ENCODE measurements at regions of chr1 and their contacts with region 1.

Region 1: GRCh38 chr1:235866913-235867845 is 473 bp upstream of the LYST start:
- DNase-seq: peak; percentile 100
- ATAC-seq: peak; percentile 67
- H3K4me3 Mint-ChIP-seq: peak overlapping the region; percentile 98
- H3K27ac Mint-ChIP-seq: peak overlapping the region; percentile 97
- H3K4me1 Mint-ChIP-seq: peaks cover 52% of the 10 kb centered on the region
- H3K27me3 Mint-ChIP-seq: no peaks in the 10 kb centered on the region

Region 2: GRCh38 chr1:235878082-235878811 is 11.1 kb after region 1 on chr1:
- POLR2A ChIA-PET with region 1: interaction called, 30 read pairs
- DNase-seq: no peak
- ATAC-seq: no peak
- H3K4me3 Mint-ChIP-seq: no peak overlapping the region
- H3K27ac Mint-ChIP-seq: no peak overlapping the region
- H3K4me1 Mint-ChIP-seq: peaks cover 51% of the 10 kb centered on the region
- H3K27me3 Mint-ChIP-seq: no peaks in the 10 kb centered on the region

Region 3: GRCh38 chr1:235888119-235888643 is 21.0 kb after region 1 on chr1:
- POLR2A ChIA-PET with region 1: interaction called, 57 read pairs
- DNase-seq: no peak
- ATAC-seq: peak; percentile 96
- H3K4me3 Mint-ChIP-seq: peak overlapping the region; percentile 77
- H3K27ac Mint-ChIP-seq: peak overlapping the region; percentile 95
- H3K4me1 Mint-ChIP-seq: peaks cover 42% of the 10 kb centered on the region
- H3K27me3 Mint-ChIP-seq: no peaks in the 10 kb centered on the region

Region 4: DNA sequence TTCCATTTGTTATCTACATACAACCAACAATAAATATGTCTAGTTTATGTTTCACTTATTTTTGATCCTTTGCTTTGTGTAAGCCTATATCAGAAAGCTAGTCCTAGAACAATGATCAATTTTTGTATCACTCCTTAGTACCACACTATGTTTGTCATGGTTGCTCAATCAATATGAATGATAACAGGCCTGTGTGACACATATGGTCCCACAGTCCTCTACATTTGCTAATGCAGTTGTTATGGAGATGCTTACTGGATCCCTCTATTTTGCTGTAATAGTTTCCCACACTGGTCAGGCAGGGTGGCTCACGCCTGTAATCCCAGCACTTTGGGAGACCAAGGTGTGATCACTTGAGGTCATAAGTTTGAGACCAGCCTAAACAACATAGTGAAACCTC is 355.5 kb after region 1 on chr1:
- POLR2A ChIA-PET with region 1: no interaction called
- DNase-seq: no peak
- ATAC-seq: no peak
- H3K4me3 Mint-ChIP-seq: no peak overlapping the region
- H3K27ac Mint-ChIP-seq: no peak overlapping the region
- H3K4me1 Mint-ChIP-seq: no peaks in the 10 kb centered on the region
- H3K27me3 Mint-ChIP-seq: no peaks in the 10 kb centered on the region